T-cell (primary cell): ENCODE measurements at regions of chr16 and their contacts with region 1.

Region 1: GRCh38 chr16:2155091-2156021 is at the start of gene TRAF7:
- DNase-seq: peak; percentile 91 to 100 (median 98)
- ATAC-seq: peak; percentile 89 to 93 (median 90)
- H3K4me3 ChIP-seq: peak within 1 kb of the TSS; percentile 97 to 99
- H3K4me3 Mint-ChIP-seq: peak within 1 kb of the TSS; percentile 79 to 96 (median 94)
- H3K27ac ChIP-seq: peak within 1 kb of the TSS; percentile 81
- H3K27ac Mint-ChIP-seq: peak within 1 kb of the TSS; percentile 88 to 94
- H3K4me1 ChIP-seq: peaks cover 18 to 86% of the 10 kb centered on the region in 2 experiments
- H3K4me1 Mint-ChIP-seq: peaks cover 48 to 65% (median 55%) of the 10 kb centered on the region in 3 donors
- H3K27me3 ChIP-seq: peaks cover 0 to 18% of the 10 kb centered on the region in 2 experiments
- H3K27me3 Mint-ChIP-seq: no peaks in the 10 kb centered on the region
- total RNA-seq, gene TRAF7: 25.6 to 54.3 (median 43.9) TPM

Region 2: GRCh38 chr16:1964506-1965395 is 190.6 kb before region 1 on chr16 and contains the start of gene RPS2:
- CTCF ChIA-PET with region 1: no interaction called
- POLR2A ChIA-PET with region 1: interaction called in 1 of 2 experiments, 10 read pairs
- DNase-seq: peak; percentile 93 to 100 (median 98)
- ATAC-seq: peak; percentile 86 to 89 (median 88)
- H3K4me3 ChIP-seq: peak within 1 kb of the TSS; percentile 83 to 95
- H3K4me3 Mint-ChIP-seq: peak within 1 kb of the TSS; percentile 91 to 93 (median 91)
- H3K27ac ChIP-seq: peak within 1 kb of the TSS; percentile 97
- H3K27ac Mint-ChIP-seq: peak within 1 kb of the TSS; percentile 95 to 96
- H3K4me1 ChIP-seq: peaks cover 12 to 55% of the 10 kb centered on the region in 2 experiments
- H3K4me1 Mint-ChIP-seq: peaks cover 37 to 49% (median 45%) of the 10 kb centered on the region in 3 donors
- H3K27me3 ChIP-seq: no peaks in the 10 kb centered on the region
- H3K27me3 Mint-ChIP-seq: no peaks in the 10 kb centered on the region
- total RNA-seq, gene RPS2: 3,208 to 3,662 (median 3,410) TPM

Region 3: GRCh38 chr16:2009789-2010510 is 145.4 kb before region 1 on chr16 and contains the start of gene ZNF598:
- CTCF ChIA-PET with region 1: no interaction called
- POLR2A ChIA-PET with region 1: interaction called in 1 of 2 experiments, 12 read pairs
- DNase-seq: peak; percentile 42 to 90 (median 70)
- ATAC-seq: peak; percentile 91 to 96 (median 96)
- H3K4me3 ChIP-seq: peak within 1 kb of the TSS; percentile 78 to 84
- H3K4me3 Mint-ChIP-seq: peak within 1 kb of the TSS; percentile 86 to 88 (median 87)
- H3K27ac ChIP-seq: peak within 1 kb of the TSS; percentile 94
- H3K27ac Mint-ChIP-seq: peak within 1 kb of the TSS; percentile 91 to 92
- H3K4me1 ChIP-seq: peaks cover 17 to 49% of the 10 kb centered on the region in 2 experiments
- H3K4me1 Mint-ChIP-seq: peaks cover 34 to 41% (median 40%) of the 10 kb centered on the region in 3 donors
- H3K27me3 ChIP-seq: no peaks in the 10 kb centered on the region
- H3K27me3 Mint-ChIP-seq: no peaks in the 10 kb centered on the region
- total RNA-seq, gene ZNF598: 44.3 to 73.7 (median 68.8) TPM

Region 4: GRCh38 chr16:2095315-2095853 is 60.0 kb before region 1 on chr16:
- CTCF ChIA-PET with region 1: no interaction called
- POLR2A ChIA-PET with region 1: no interaction called
- DNase-seq: no peak
- ATAC-seq: no peak
- H3K4me3 ChIP-seq: no peak overlapping the region
- H3K4me3 Mint-ChIP-seq: no peak overlapping the region
- H3K27ac ChIP-seq: no peak overlapping the region
- H3K27ac Mint-ChIP-seq: no peak overlapping the region
- H3K4me1 ChIP-seq: no peaks in the 10 kb centered on the region
- H3K4me1 Mint-ChIP-seq: no peaks in the 10 kb centered on the region
- H3K27me3 ChIP-seq: no peaks in the 10 kb centered on the region
- H3K27me3 Mint-ChIP-seq: no peaks in the 10 kb centered on the region

Region 5: GRCh38 chr16:2142942-2143877 is 12.1 kb before region 1 on chr16:
- CTCF ChIA-PET with region 1: interaction called, 3 to 24 read pairs
- POLR2A ChIA-PET with region 1: interaction called, 3 to 4 read pairs
- DNase-seq: no peak
- ATAC-seq: no peak
- H3K4me3 ChIP-seq: no peak overlapping the region
- H3K4me3 Mint-ChIP-seq: no peak overlapping the region
- H3K27ac ChIP-seq: no peak overlapping the region
- H3K27ac Mint-ChIP-seq: no peak overlapping the region
- H3K4me1 ChIP-seq: peaks cover 0 to 15% of the 10 kb centered on the region in 2 experiments
- H3K4me1 Mint-ChIP-seq: peaks cover 4 to 8% (median 4%) of the 10 kb centered on the region in 3 donors
- H3K27me3 ChIP-seq: peaks cover 0 to 12% of the 10 kb centered on the region in 2 experiments
- H3K27me3 Mint-ChIP-seq: no peaks in the 10 kb centered on the region

Region 6: GRCh38 chr16:2180962-2181923 is 25.9 kb after region 1 on chr16:
- CTCF ChIA-PET with region 1: no interaction called
- POLR2A ChIA-PET with region 1: no interaction called
- DNase-seq: no peak
- ATAC-seq: no peak
- H3K4me3 ChIP-seq: no peak overlapping the region
- H3K4me3 Mint-ChIP-seq: no peak overlapping the region
- H3K27ac ChIP-seq: no peak overlapping the region
- H3K27ac Mint-ChIP-seq: no peak overlapping the region
- H3K4me1 ChIP-seq: peaks cover 0 to 6% of the 10 kb centered on the region in 2 experiments
- H3K4me1 Mint-ChIP-seq: peaks cover 0 to 1% (median 0%) of the 10 kb centered on the region in 3 donors
- H3K27me3 ChIP-seq: no peaks in the 10 kb centered on the region
- H3K27me3 Mint-ChIP-seq: no peaks in the 10 kb centered on the region

Region 7: GRCh38 chr16:2296661-2297505 is 141.5 kb after region 1 on chr16:
- CTCF ChIA-PET with region 1: no interaction called
- POLR2A ChIA-PET with region 1: no interaction called
- DNase-seq: peak in 1 of 35 experiments; percentile 26
- ATAC-seq: peak in 1 of 4 experiments; percentile 29
- H3K4me3 ChIP-seq: no peak overlapping the region
- H3K4me3 Mint-ChIP-seq: no peak overlapping the region
- H3K27ac ChIP-seq: no peak overlapping the region
- H3K27ac Mint-ChIP-seq: no peak overlapping the region
- H3K4me1 ChIP-seq: peaks cover 0 to 9% of the 10 kb centered on the region in 2 experiments
- H3K4me1 Mint-ChIP-seq: no peaks in the 10 kb centered on the region
- H3K27me3 ChIP-seq: no peaks in the 10 kb centered on the region
- H3K27me3 Mint-ChIP-seq: no peaks in the 10 kb centered on the region